ENCODE measurements at regions of chr5 and their contacts with region 1.

Region 1: GRCh38 chr5:13660072-13660471 is 284.4 kb downstream of the DNAH5 start:
- DNase-seq: peak; percentile 70
- ATAC-seq: no peak
- H3K4me3 ChIP-seq: no peak overlapping the region
- H3K27ac ChIP-seq: no peak overlapping the region
- H3K4me1 ChIP-seq: peaks cover 10% of the 10 kb centered on the region
- H3K27me3 ChIP-seq: no peaks in the 10 kb centered on the region
- CTCF ChIP-seq: peak; percentile 40; the same call in 1 of the 2 replicates
- POLR2A ChIP-seq: no peak
- RAD21 ChIP-seq: peak; percentile 46; the same call in 1 of the 2 replicates

Region 2: GRCh38 chr5:13478831-13479465 is 181.1 kb before region 1 on chr5:
- CTCF ChIA-PET with region 1: interaction called, 13 read pairs
- POLR2A ChIA-PET with region 1: no interaction called
- dilution Hi-C with region 1: no loop called
- in situ Hi-C with region 1: no loop called
- intact Hi-C with region 1: no loop called
- DNase-seq: peak; percentile 46
- ATAC-seq: peak; percentile 90
- H3K4me3 ChIP-seq: no peak overlapping the region
- H3K27ac ChIP-seq: no peak overlapping the region
- H3K4me1 ChIP-seq: no peaks in the 10 kb centered on the region
- H3K27me3 ChIP-seq: peaks cover 5% of the 10 kb centered on the region
- CTCF ChIP-seq: peak; percentile 64
- POLR2A ChIP-seq: no peak
- RAD21 ChIP-seq: peak; percentile 70

Region 3: DNA sequence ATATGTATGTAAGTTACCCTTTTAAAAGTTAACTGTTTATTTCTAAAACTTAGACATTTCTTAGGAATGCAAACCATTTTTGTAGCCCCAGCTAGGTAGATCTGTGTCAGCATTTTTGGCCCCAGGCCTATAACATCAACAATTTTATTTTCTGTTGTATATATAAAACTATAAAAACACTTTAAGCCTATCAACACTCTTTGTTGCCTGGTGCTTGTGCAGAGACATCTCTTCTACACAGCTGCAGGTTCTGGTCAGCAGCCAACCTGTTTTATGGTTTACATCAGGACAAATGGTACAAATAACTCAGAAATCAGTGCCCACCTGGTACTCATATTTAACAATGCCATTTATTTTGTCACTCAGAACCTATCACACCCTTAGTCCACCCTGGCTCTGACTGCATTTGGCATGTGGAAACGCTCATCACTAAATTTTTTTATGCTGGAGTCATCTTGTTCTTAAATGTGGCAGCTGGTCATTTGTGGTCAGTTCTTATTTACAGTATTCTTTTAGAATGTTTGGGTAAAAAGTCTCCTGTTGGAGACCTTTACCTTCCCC is 111.0 kb after region 1 on chr5:
- CTCF ChIA-PET with region 1: no interaction called
- POLR2A ChIA-PET with region 1: no interaction called
- dilution Hi-C with region 1: no loop called
- in situ Hi-C with region 1: no loop called
- intact Hi-C with region 1: loop called (anchors 5 kb)
- DNase-seq: peak; percentile 88
- ATAC-seq: peak; percentile 86
- H3K4me3 ChIP-seq: no peak overlapping the region
- H3K27ac ChIP-seq: peak overlapping the region; percentile 30; the same call in 1 of the 2 replicates
- H3K4me1 ChIP-seq: peaks cover 14% of the 10 kb centered on the region
- H3K27me3 ChIP-seq: no peaks in the 10 kb centered on the region
- CTCF ChIP-seq: no peak
- POLR2A ChIP-seq: no peak
- RAD21 ChIP-seq: no peak

Region 4: DNA sequence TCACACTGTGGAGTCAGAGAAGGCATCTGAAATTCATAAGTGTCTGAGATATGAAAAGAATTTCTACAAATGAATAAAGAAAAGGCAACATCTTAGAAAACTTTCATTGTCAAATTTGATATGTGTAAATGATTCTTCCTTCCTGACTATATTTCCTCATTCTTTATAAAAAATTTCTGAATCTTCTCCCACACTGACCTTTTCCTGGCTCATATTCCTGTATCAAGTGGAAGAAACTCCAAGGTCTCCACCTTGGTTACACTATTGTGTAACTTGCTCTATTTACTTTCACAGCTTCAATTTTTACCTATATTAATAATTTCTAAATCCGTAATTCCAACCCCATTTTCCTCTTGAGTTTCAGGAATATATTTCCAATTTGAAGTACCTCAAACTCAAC is 1746.4 kb after region 1 on chr5:
- CTCF ChIA-PET with region 1: no interaction called
- POLR2A ChIA-PET with region 1: no interaction called
- dilution Hi-C with region 1: no loop called
- in situ Hi-C with region 1: no loop called
- intact Hi-C with region 1: no loop called
- DNase-seq: no peak
- ATAC-seq: no peak
- H3K4me3 ChIP-seq: no peak overlapping the region
- H3K27ac ChIP-seq: no peak overlapping the region
- H3K4me1 ChIP-seq: no peaks in the 10 kb centered on the region
- H3K27me3 ChIP-seq: no peaks in the 10 kb centered on the region
- CTCF ChIP-seq: no peak
- POLR2A ChIP-seq: no peak
- RAD21 ChIP-seq: no peak